Left colon (tissue), 2 donors: ENCODE measurements at regions of chr7 and their contacts with region 1.

Region 1: GRCh38 chr7:75957012-75957736 is 37.2 kb downstream of the TMEM120A start:
- DNase-seq: peak; percentile 78 to 88
- ATAC-seq: peak; percentile 89

Region 2: DNA sequence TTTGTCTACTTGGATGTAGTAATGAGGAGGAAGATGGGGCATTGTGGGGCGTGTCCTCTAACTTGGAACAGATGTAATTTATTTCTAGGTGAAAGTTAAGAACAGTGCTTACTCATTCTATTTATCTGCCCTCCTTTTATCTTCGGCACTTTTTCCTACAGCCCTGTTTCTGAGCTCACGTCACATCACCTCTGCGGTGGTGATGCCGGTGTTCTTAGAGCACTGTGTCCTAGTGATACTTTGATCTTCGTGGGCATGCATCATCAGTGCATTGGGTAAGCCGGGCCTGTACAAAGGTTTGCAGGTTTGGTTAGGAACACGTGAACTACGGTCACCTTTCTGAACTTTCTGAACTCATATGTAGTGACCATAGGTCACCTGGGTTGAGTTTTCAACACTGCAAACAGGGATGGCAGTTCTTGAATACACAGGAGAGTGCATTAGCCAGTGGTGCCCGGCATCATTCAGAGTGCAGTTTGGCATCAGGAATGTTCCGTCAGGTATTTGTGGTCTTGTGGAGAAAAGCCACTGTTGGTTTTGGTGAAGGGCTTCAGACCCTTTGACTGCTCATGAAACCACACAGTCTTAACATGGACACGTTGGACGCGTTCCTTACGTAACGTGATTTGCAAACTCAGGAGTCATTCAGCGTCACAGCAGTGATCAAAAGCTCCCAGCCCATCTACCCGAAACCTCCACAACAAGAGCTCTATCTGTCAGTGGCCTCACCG is 36.6 kb before region 1 on chr7:
- intact Hi-C with region 1: loop called in 1 of 2 experiments (anchors 5 kb)
- DNase-seq: peak; percentile 32 to 53
- ATAC-seq: peak; percentile 80

Region 3: GRCh38 chr7:75937958-75938786 is 19.0 kb before region 1 on chr7:
- intact Hi-C with region 1: no loop called
- DNase-seq: peak in 1 of 2 donors; percentile 60
- ATAC-seq: no peak